Ascending aorta (tissue), 2 donors: ENCODE measurements at regions of chr19 and their contacts with region 1.

Region 1: DNA sequence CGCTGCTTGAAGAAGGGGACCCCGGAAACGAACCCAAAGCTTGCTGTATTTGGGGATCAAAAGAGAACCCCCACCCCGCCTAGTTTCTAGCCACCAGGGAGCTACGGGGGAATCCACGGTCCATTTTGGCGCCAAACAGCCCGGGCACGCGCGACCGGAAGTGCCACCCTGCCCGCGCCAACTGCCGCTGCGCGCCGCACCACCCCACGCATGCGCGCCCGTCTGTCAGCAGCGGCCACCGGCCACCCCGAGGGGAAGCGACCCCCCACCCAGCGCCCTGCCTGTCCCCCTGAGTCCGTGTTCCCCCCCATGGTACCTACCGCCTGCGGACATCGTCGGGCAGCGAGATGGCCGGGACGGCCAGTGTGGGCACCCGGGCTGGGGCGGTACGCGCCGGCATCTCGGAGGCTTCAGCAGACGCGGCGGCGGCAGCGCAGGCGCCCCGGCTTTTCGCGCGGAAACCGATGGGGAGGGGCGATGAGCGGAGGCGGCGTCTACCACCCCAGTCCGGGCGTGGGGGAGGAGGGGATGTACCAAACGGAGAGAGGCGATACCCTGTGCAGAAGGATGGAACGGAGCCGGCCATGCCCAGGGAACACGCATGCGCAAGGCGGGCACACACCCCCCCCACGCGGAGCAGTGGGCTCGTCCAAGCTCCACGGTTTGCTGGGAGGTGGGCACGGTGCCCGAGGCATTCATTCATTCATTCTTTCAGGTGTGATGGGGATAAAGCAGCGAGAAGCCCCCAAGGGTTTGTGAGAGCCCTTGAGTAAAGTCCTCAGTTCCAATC is at the start of gene DNMT1:
- DNase-seq: peak; percentile 75 to 96
- H3K4me3 ChIP-seq: peak within 1 kb of the TSS; percentile 81 to 97
- H3K27ac ChIP-seq: peak within 1 kb of the TSS; percentile 86 to 89
- H3K4me1 ChIP-seq: peaks cover 3 to 21% of the 10 kb centered on the region in 2 donors
- H3K27me3 ChIP-seq: no peaks in the 10 kb centered on the region
- CTCF ChIP-seq: no peak
- total RNA-seq, gene DNMT1: 54.0 TPM

Region 2: DNA sequence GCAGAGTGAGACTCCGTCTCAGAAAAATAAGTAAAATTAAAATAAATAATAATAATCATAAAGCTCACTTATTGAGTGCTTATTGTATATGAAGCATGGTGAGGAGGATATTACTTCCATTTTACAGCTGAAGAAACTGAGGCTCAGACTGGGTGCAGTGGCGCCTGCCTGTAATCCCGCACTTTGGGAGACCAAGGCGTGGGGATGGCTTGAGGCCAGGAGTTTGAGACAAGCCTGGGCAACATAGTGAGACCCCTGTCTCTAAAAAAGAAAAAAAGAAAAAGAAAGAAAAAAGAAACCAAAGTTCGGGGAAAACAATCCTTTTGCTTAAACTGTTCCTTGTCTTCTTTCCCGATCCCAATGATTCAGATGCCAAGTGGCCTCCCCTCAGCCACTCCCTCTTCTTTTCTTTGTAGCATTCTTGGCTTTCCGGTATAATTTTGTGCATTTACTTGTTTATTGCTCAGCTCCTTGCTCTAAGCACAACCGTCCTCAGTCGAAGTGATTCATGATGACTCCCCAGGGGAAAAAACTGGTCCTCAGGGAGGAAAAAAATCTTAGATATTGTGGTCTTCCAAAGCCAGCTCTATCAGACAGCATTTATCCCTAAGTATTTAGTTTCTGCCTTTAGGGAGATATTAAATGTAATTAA is 74.0 kb before region 1 on chr19:
- intact Hi-C with region 1: loop called (anchors 2 kb)
- DNase-seq: peak in 1 of 2 donors; percentile 80
- H3K4me3 ChIP-seq: peak overlapping the region in 1 of 2 donors; percentile 99
- H3K27ac ChIP-seq: peak overlapping the region; percentile 84 to 87
- H3K4me1 ChIP-seq: peaks cover 15 to 27% of the 10 kb centered on the region in 2 donors
- H3K27me3 ChIP-seq: no peaks in the 10 kb centered on the region
- CTCF ChIP-seq: no peak